PC-9 (cell line): ENCODE measurements at regions of chr6 and their contacts with region 1.

Region 1: GRCh38 chr6:90216072-90216977 is 80.3 kb downstream of the BACH2 start:
- DNase-seq: no peak
- H3K4me3 ChIP-seq: no peak overlapping the region
- H3K27ac ChIP-seq: no peak overlapping the region
- H3K4me1 ChIP-seq: peaks cover 36% of the 10 kb centered on the region
- H3K27me3 ChIP-seq: no peaks in the 10 kb centered on the region
- CTCF ChIP-seq: no peak

Region 2: GRCh38 chr6:89745716-89746115 is 470.6 kb before region 1 on chr6:
- CTCF ChIA-PET with region 1: no interaction called
- POLR2A ChIA-PET with region 1: no interaction called
- intact Hi-C with region 1: no loop called
- DNase-seq: no peak
- H3K4me3 ChIP-seq: no peak overlapping the region
- H3K27ac ChIP-seq: no peak overlapping the region
- H3K4me1 ChIP-seq: no peaks in the 10 kb centered on the region
- H3K27me3 ChIP-seq: no peaks in the 10 kb centered on the region
- CTCF ChIP-seq: no peak

Region 3: DNA sequence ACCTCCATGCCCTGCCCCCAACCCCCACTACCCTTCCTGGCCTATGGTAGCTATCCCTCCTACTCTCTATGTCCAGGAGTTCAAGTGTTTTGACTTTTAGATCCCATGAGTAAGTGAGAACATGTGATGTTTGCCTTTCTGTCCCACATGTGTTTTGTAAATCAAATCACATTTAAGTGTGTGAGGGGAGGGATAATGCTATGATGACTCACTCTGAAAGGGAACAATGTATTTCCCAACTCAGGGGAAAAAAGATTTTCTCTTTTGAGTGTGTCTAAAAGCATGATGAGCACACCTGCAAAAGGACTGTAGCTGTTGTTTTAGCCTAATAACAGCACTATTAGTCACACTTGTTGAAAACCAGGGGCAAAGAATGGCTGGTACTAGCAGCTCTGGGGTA is 128.3 kb before region 1 on chr6:
- CTCF ChIA-PET with region 1: no interaction called
- POLR2A ChIA-PET with region 1: no interaction called
- intact Hi-C with region 1: loop called (anchors 5 kb)
- DNase-seq: peak in 1 of 2 experiments; percentile 59
- H3K4me3 ChIP-seq: no peak overlapping the region
- H3K27ac ChIP-seq: peak overlapping the region; percentile 39; the same call in 1 of the 2 replicates
- H3K4me1 ChIP-seq: peaks cover 26% of the 10 kb centered on the region
- H3K27me3 ChIP-seq: no peaks in the 10 kb centered on the region
- CTCF ChIP-seq: no peak

Region 4: DNA sequence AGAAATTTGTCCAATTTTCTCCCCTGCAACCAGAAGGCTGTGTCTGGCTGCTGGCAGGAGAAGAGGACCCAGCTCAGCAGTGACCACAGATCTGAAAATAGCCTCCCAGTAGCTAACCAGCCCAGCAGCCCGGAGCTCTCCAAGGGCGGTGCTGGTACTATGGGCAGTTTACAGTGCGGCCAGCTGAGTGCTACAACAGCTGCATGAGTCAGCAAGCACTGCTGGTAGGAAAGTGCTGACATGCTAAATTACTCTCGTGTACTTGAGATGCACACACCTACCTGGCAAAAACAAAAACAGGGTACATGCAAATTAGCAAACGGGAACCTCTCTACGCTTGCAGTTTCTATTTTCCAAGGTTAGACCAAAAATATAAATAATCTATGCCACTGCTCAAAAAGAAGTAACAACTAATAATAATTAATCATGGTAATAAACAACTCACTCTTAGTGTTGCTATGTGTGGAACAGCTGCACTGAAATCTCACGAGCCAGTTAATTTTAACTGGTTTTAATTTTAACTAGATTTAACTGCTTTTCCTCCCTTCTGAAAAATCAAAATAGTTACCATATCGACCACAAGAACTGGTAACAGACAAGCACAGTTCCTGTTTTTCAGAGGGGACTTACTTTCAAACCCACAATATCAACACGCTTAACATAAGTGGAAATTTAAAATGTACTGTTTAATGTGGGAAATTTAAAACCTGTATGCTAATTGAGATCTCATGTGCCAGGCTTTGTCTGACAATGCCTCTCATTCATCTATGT is 69.5 kb after region 1 on chr6:
- CTCF ChIA-PET with region 1: no interaction called
- POLR2A ChIA-PET with region 1: no interaction called
- intact Hi-C with region 1: loop called (anchors 1 kb)
- DNase-seq: peak; percentile 69
- H3K4me3 ChIP-seq: no peak overlapping the region
- H3K27ac ChIP-seq: peak overlapping the region; percentile 87
- H3K4me1 ChIP-seq: peaks cover 22% of the 10 kb centered on the region
- H3K27me3 ChIP-seq: no peaks in the 10 kb centered on the region
- CTCF ChIP-seq: no peak

Region 5: DNA sequence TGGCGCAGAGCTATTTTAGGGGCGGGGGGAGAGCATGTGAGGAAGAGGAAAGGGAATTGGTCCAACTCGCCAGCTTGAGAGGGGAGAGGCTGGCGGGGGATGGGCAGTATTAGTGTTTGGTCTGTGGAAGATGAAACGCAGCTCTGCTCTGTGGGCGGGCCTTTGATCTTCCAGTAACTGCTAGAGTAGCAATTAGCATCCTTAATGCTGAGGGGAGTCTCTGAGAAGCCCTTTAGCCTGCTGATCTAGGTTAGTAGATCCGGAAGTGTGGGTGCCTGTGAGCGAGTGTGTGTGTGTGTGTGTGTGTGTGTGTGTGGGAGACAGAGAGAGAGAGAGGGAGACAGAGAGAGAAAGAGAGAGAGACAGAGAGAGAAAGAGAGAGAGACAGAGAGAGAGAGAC is 197.5 kb after region 1 on chr6:
- CTCF ChIA-PET with region 1: no interaction called
- POLR2A ChIA-PET with region 1: no interaction called
- intact Hi-C with region 1: loop called (anchors 1 kb)
- DNase-seq: no peak
- H3K4me3 ChIP-seq: no peak overlapping the region
- H3K27ac ChIP-seq: no peak overlapping the region
- H3K4me1 ChIP-seq: peaks cover 23% of the 10 kb centered on the region
- H3K27me3 ChIP-seq: no peaks in the 10 kb centered on the region
- CTCF ChIP-seq: no peak